Transverse colon (tissue), 4 donors: ENCODE measurements at regions of chr20 and their contacts with region 1.

Region 1: GRCh38 chr20:25496968-25497640 is 88.2 kb downstream of the NINL start:
- DNase-seq: no peak
- H3K4me3 ChIP-seq: no peak overlapping the region
- H3K27ac ChIP-seq: no peak overlapping the region
- H3K4me1 ChIP-seq: no peaks in the 10 kb centered on the region
- H3K27me3 ChIP-seq: no peaks in the 10 kb centered on the region
- CTCF ChIP-seq: no peak
- EP300 ChIP-seq: no peak
- POLR2A ChIP-seq: no peak

Region 2: GRCh38 chr20:24100385-24101011 is 1396.6 kb before region 1 on chr20:
- in situ Hi-C with region 1: no loop called
- intact Hi-C with region 1: loop called (anchors 5 kb)
- DNase-seq: peak; percentile 25
- H3K4me3 ChIP-seq: no peak overlapping the region
- H3K27ac ChIP-seq: no peak overlapping the region
- H3K4me1 ChIP-seq: no peaks in the 10 kb centered on the region
- H3K27me3 ChIP-seq: peaks cover 13% of the 10 kb centered on the region
- CTCF ChIP-seq: peak; percentile 27 to 63 (median 48)
- EP300 ChIP-seq: no peak
- POLR2A ChIP-seq: no peak

Region 3: DNA sequence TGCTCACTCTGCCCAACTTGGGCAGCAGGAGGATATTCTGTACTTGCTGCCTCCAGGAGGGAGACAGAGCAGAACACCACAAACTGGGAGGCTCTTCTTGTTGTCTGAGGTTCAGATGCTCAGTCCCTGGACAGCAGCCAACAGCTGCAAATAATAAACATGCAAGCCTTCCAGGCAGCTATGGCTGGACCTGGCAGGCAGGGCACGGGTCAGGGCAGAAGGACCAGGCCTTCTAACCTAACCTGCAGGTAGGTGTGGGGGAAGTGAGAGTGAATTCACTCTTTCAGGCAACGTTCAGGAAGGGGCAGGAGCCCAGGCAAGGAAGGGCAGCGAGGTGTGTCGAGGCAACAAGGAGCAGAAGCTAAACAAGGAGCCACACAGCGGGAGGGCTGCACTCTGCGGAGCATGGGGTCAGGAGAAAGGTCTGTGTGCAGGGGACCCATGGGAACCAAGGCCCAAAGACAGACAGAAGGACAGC is 56.8 kb after region 1 on chr20:
- in situ Hi-C with region 1: no loop called
- intact Hi-C with region 1: no loop called
- DNase-seq: no peak
- H3K4me3 ChIP-seq: no peak overlapping the region
- H3K27ac ChIP-seq: peak overlapping the region in 1 of 4 donors; percentile 46
- H3K4me1 ChIP-seq: peaks cover 12 to 34% (median 18%) of the 10 kb centered on the region in 4 donors
- H3K27me3 ChIP-seq: no peaks in the 10 kb centered on the region
- CTCF ChIP-seq: no peak
- EP300 ChIP-seq: no peak
- POLR2A ChIP-seq: no peak

Region 4: DNA sequence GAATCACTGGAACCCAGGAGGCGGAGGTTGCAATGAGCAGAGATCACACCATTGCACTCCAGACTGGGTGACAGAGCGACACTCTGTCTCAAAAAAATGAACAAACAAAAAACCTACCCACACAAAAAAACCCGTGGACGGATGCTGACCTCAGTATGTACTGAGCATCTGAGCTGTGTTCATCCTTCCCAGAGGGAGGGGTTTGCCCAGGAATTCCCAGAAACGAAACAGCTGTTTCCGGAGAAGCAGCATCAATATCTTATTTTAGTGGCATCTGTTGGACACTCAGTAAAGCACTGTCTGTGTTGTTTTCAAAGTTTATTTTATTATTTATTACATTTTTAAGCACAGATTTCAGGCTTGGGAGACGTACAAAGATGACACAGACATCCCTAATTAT is 108.0 kb after region 1 on chr20:
- in situ Hi-C with region 1: no loop called
- intact Hi-C with region 1: no loop called
- DNase-seq: no peak
- H3K4me3 ChIP-seq: no peak overlapping the region
- H3K27ac ChIP-seq: no peak overlapping the region
- H3K4me1 ChIP-seq: no peaks in the 10 kb centered on the region
- H3K27me3 ChIP-seq: no peaks in the 10 kb centered on the region
- CTCF ChIP-seq: no peak
- EP300 ChIP-seq: no peak
- POLR2A ChIP-seq: no peak